Aorta (tissue), 5 donors: ENCODE measurements at regions of chr4 and their contacts with region 1.

Region 1: GRCh38 chr4:101730291-101731117 is 60.0 kb upstream of the BANK1 start:
- DNase-seq: peak; percentile 62 to 69
- ATAC-seq: no peak
- H3K4me3 ChIP-seq: no peak overlapping the region
- H3K27ac ChIP-seq: no peak overlapping the region
- H3K4me1 ChIP-seq: no peaks in the 10 kb centered on the region
- H3K27me3 ChIP-seq: no peaks in the 10 kb centered on the region

Region 2: GRCh38 chr4:101169044-101170014 is 561.2 kb before region 1 on chr4:
- intact Hi-C with region 1: loop called in 1 of 2 experiments (anchors 10 kb)
- DNase-seq: peak; percentile 48 to 67
- ATAC-seq: peak; percentile 87
- H3K4me3 ChIP-seq: no peak overlapping the region
- H3K27ac ChIP-seq: no peak overlapping the region
- H3K4me1 ChIP-seq: no peaks in the 10 kb centered on the region
- H3K27me3 ChIP-seq: no peaks in the 10 kb centered on the region

Region 3: GRCh38 chr4:101718810-101719209 is 11.7 kb before region 1 on chr4:
- intact Hi-C with region 1: no loop called
- DNase-seq: no peak
- ATAC-seq: no peak
- H3K4me3 ChIP-seq: no peak overlapping the region
- H3K27ac ChIP-seq: no peak overlapping the region
- H3K4me1 ChIP-seq: no peaks in the 10 kb centered on the region
- H3K27me3 ChIP-seq: no peaks in the 10 kb centered on the region